Breast epithelium (tissue), 4 donors: ENCODE measurements at regions of chr19 and their contacts with region 1.

Region 1: GRCh38 chr19:20259615-20260014 is 92.6 kb downstream of the ZNF486 start:
- DNase-seq: no peak
- H3K4me3 ChIP-seq: no peak overlapping the region
- H3K27ac ChIP-seq: no peak overlapping the region
- H3K4me1 ChIP-seq: no peaks in the 10 kb centered on the region
- H3K27me3 ChIP-seq: peaks cover 0 to 5% of the 10 kb centered on the region in 2 donors
- CTCF ChIP-seq: no peak
- POLR2A ChIP-seq: no peak

Region 2: GRCh38 chr19:20294181-20294580 is 34.6 kb after region 1 on chr19:
- intact Hi-C with region 1: no loop called
- DNase-seq: no peak
- H3K4me3 ChIP-seq: no peak overlapping the region
- H3K27ac ChIP-seq: no peak overlapping the region
- H3K4me1 ChIP-seq: no peaks in the 10 kb centered on the region
- H3K27me3 ChIP-seq: no peaks in the 10 kb centered on the region
- CTCF ChIP-seq: no peak
- POLR2A ChIP-seq: no peak

Region 3: DNA sequence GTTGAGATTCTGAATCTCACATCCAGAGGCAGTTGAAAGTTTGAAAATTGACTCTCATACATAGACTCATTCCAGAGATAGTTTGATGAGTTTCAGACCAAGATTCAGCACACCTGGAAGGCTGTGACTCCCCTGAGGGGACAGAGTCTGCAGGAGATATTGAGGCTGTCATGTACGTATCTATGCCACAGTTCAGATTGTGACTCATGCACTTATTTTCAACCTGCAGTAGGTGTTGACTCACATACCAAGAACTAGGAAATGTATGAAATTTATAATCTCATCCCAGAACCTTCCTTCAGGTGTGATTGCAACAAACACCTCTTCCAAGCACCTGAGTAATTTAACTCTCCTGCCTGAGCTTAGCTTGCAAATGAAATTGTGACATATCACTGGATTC is 1640.8 kb after region 1 on chr19:
- intact Hi-C with region 1: loop called (anchors 10 kb)
- DNase-seq: no peak
- H3K4me3 ChIP-seq: no peak overlapping the region
- H3K27ac ChIP-seq: no peak overlapping the region
- H3K4me1 ChIP-seq: no peaks in the 10 kb centered on the region
- H3K27me3 ChIP-seq: no peaks in the 10 kb centered on the region
- CTCF ChIP-seq: no peak
- POLR2A ChIP-seq: no peak